ENCODE measurements at regions of chr4 and their contacts with region 1.

Region 1: GRCh38 chr4:26235500-26235899 is 85.3 kb upstream of the RBPJ start:
- DNase-seq: no peak
- CTCF ChIP-seq: no peak

Region 2: DNA sequence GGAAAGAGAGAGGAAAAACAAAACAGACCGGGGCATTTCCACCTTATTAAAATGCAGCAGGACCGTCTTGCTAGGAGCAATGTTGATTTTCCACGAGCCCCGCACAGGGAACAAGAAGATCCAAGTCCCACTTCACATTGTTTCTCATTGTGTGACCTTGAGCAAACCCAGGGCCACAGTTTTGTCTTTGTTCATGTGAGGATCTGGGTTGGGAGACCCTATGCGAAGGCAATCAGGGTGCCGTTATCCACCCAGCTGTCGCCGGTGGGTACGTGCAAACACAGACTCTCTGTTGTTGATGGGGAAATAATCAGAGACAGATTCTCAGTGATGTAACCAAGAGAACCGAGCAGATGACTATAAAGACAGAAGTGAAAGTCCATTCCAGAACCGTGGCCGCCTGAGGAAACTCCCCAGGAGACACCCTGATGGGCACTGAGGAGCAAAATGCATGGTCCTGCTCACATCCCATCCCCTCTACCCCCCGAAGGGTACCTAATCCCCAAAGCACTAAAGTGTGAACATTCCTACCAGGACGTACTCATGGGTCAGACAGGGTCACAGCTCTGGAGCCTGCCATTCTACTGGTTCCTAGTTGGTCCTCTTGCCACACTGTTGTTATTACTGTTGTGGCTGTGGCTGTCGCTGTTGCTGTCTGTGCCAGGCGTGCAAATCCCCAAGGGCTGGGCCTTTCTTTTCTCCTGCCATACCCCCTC is 17.4 kb before region 1 on chr4:
- CTCF ChIA-PET with region 1: interaction called, 10 read pairs
- POLR2A ChIA-PET with region 1: no interaction called
- DNase-seq: peak; percentile 58
- CTCF ChIP-seq: no peak

Region 3: DNA sequence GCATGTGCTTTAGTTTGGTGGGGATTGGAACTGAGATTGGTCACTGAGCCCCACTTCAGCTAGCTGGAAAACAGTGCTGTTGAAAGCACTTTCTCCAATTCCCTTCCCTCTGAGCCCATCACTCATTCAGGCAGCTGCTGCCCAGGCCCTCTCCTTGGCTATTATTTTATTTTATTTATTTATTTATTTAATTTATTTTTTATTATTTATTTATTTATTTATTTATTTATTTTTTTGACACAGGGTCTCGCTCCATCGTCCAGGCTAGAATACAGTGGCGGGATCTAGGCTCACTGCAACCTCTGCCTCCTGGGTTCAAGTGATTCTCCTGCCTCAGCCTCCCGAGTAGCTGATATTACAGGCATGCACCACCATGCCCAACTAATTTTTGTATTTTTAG is 33.5 kb after region 1 on chr4:
- CTCF ChIA-PET with region 1: no interaction called
- POLR2A ChIA-PET with region 1: no interaction called
- DNase-seq: no peak
- CTCF ChIP-seq: no peak

Region 4: GRCh38 chr4:26356081-26356501 is 120.6 kb after region 1 on chr4:
- CTCF ChIA-PET with region 1: no interaction called
- POLR2A ChIA-PET with region 1: no interaction called
- DNase-seq: no peak
- CTCF ChIP-seq: no peak

Measured in GM10248 (cell line).